ENCODE measurements at regions of chr15 and their contacts with region 1.

Region 1: DNA sequence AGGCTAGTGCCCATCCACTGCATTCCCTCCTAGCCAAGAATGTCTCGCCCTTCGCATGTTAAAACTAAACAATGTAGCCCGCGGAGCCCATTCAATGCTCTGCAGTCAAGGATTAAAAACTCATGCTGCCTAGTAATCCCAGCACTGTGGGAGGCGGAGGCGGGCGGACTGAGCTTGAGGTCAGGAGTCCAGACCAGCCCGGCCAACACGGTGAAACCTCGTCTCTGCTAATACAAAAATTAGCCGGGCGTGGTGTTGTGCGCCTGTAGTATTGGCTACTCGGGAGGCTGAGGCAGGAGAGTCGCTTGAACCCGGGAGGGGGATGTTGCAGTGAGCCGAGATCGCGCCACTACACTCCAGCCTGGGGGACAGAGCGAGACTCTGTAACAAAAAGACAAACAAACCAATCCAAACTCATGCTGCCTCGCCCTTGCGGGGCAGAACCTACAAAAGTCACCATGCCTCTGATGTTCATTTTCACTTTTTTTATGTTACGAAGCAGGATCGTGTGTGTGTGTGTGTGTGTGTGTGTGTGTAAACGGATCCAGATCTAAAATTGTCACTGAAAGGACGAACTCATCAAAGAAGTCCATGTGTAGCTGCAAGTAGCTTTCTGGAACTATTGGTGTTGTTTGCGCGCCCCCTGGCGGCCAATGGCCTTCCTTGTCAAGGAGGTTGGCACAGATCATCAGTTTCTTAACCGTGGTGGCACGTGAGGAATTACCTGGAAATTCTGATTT is 54.8 kb upstream of the SPESP1 start:
- DNase-seq: peak; percentile 91 to 99
- H3K4me3 ChIP-seq: no peak overlapping the region
- CTCF ChIP-seq: peak in 1 of 3 donors; percentile 80
- POLR2A ChIP-seq: no peak

Region 2: GRCh38 chr15:68304589-68305337 is 570.8 kb before region 1 on chr15:
- intact Hi-C with region 1: loop called (anchors 10 kb)
- DNase-seq: peak in 1 of 2 donors; percentile 80
- H3K4me3 ChIP-seq: no peak overlapping the region
- CTCF ChIP-seq: no peak
- POLR2A ChIP-seq: no peak

Region 3: DNA sequence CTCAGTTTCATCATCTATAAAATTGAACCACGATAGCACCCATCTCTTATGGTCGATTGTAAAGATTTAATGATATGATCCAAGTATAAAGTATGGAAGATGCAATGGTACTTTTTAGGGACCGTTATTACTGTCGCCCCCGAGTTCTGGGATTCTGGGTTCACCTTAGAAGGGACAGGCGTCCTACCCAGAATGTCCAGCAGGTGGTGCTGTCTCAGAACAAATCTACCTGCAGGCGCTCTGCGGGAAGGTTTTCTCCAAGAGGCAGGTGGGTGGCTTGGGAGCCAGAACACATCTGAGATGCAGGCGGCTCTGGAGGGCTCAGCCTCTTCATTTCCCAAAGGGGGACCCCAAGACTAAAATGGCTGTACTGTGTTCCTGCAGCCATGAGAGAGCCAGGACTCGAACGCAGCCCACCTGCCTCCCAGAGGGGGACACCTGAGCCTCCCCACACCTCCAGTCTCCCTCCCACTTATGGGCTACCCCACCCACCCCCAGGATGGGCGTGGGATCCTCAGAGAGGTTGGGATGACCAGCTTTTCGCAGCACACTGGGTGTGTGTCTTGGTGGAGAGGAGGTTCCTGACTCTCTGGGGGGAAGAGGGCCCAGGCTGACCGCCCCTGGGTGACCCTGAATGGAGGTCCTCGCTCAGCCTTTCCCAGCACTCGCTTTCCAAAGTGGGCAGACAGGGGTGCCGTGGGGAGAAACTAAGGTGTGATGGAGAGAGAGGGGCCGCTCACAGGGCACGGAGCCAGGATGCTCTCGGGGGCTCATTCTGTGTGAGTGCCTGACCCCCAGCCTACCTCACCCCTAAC is 324.9 kb before region 1 on chr15:
- intact Hi-C with region 1: loop called (anchors 5 kb)
- DNase-seq: peak; percentile 70 to 96
- H3K4me3 ChIP-seq: no peak overlapping the region
- CTCF ChIP-seq: peak in 1 of 3 donors; percentile 69
- POLR2A ChIP-seq: no peak